ENCODE measurements at regions of chr11 and their contacts with region 1.

Region 1: GRCh38 chr11:125663910-125664309 is 16.7 kb downstream of the ACRV1 start:
- DNase-seq: no peak
- ATAC-seq: no peak
- H3K4me3 ChIP-seq: no peak overlapping the region
- H3K27ac ChIP-seq: no peak overlapping the region
- H3K4me1 ChIP-seq: no peaks in the 10 kb centered on the region
- H3K27me3 ChIP-seq: no peaks in the 10 kb centered on the region
- CTCF ChIP-seq: no peak

Region 2: DNA sequence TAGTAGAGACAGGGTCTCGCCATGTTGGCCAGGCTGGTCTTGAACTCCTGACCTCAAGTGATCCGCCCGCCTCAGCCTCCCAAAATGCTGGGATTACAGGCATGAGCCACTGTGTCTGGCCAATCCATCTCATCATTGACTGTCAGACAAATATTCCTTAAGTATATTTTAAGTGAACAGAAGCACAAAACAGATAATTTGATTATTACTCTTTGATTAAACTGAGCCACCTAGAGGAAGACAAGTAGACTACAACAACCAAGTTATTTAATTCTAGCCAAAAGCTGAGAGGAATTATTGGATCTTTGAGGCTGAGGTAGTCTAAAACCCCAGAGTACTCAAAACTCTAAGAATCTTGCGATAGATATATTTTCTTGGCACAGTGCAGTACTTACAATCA is 15.5 kb after region 1 on chr11:
- CTCF ChIA-PET with region 1: no interaction called
- POLR2A ChIA-PET with region 1: no interaction called
- in situ Hi-C with region 1: no loop called
- intact Hi-C with region 1: no loop called
- DNase-seq: no peak
- ATAC-seq: no peak
- H3K4me3 ChIP-seq: no peak overlapping the region
- H3K27ac ChIP-seq: no peak overlapping the region
- H3K4me1 ChIP-seq: no peaks in the 10 kb centered on the region
- H3K27me3 ChIP-seq: no peaks in the 10 kb centered on the region
- CTCF ChIP-seq: peak; percentile 51; the same call in 1 of the 2 replicates

Region 3: DNA sequence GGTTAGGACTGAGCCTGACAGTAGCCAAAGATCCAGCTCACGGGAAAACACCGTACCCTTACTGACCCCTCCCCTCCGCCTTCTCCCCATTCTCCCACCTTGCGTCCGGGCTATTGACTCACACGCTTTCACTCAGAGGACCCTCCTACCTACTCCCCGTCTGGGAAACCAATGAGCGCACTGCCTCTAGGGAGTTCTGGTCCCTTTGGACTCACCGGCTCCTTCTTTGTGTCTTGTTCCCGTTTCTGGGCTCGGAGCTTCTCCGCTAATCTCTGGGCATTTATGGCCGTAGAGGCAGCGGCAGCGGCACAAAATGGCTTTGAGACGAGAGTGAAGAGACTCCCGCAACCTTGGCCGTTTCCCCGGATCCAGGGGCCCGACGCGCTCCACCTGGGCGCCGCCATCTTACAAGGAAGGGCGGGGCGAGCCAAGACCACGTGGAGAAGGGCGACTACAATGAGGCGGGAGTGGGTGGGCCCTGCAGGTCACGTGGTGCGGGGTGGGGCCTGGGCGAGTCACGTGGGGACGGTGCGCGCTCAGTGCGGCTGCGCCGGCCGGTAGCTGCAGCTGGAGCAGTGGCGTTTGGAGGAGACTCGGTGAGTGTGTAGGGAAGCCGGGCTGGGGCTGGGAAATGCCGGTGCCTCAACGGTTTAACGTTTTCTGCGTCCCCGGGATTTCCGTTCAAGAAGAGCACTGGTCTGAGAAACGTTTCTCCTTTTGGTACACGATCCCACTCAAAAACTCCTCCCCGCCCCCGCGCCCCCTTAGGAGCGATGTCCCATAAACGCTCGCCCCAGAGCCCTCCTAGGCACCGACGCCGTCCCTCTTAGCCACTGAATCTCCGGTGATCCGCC is 547.6 kb after region 1 on chr11 and contains the starts of genes FAM118B and RPUSD4:
- CTCF ChIA-PET with region 1: interaction called, 10 read pairs
- POLR2A ChIA-PET with region 1: no interaction called
- in situ Hi-C with region 1: no loop called
- intact Hi-C with region 1: no loop called
- DNase-seq: peak; percentile 69
- ATAC-seq: peak; percentile 98
- H3K4me3 ChIP-seq: peak within 1 kb of the TSS; percentile 87 to 99
- H3K27ac ChIP-seq: peak within 1 kb of the TSS; percentile 90
- H3K4me1 ChIP-seq: peaks cover 26% of the 10 kb centered on the region
- H3K27me3 ChIP-seq: no peaks in the 10 kb centered on the region
- CTCF ChIP-seq: no peak
- total RNA-seq, gene FAM118B: 41.6 TPM
- total RNA-seq, gene RPUSD4: 52.3 TPM

Measured in Panc1 (cell line).